Naive thymus-derived CD4-positive, alpha-beta T cell (primary cell): ENCODE measurements at regions of chr3 and their contacts with region 1.

Region 1: GRCh38 chr3:185937689-185938463 is at the start of gene TRA2B:
- DNase-seq: peak; percentile 93 to 99 (median 99)
- ATAC-seq: peak; percentile 94
- H3K4me3 ChIP-seq: peak within 1 kb of the TSS; percentile 99
- H3K4me3 Mint-ChIP-seq: peak within 1 kb of the TSS; percentile 91 to 100 (median 100)
- H3K27ac ChIP-seq: peak within 1 kb of the TSS; percentile 95
- H3K27ac Mint-ChIP-seq: peak within 1 kb of the TSS; percentile 99 to 100 (median 100)
- H3K4me1 ChIP-seq: peaks cover 16 to 20% of the 10 kb centered on the region in 2 donors
- H3K4me1 Mint-ChIP-seq: peaks cover 27 to 52% (median 41%) of the 10 kb centered on the region in 7 donors
- H3K27me3 ChIP-seq: no peaks in the 10 kb centered on the region
- H3K27me3 Mint-ChIP-seq: peaks cover 0 to 16% (median 0%) of the 10 kb centered on the region in 5 donors
- total RNA-seq, gene TRA2B: 194 to 673 (median 216) TPM

Region 2: GRCh38 chr3:185021256-185021655 is 916.6 kb before region 1 on chr3:
- CTCF ChIA-PET with region 1: no interaction called
- POLR2A ChIA-PET with region 1: no interaction called
- intact Hi-C with region 1: no loop called
- DNase-seq: no peak
- ATAC-seq: no peak
- H3K4me3 ChIP-seq: no peak overlapping the region
- H3K4me3 Mint-ChIP-seq: no peak overlapping the region
- H3K27ac ChIP-seq: no peak overlapping the region
- H3K27ac Mint-ChIP-seq: no peak overlapping the region
- H3K4me1 ChIP-seq: no peaks in the 10 kb centered on the region
- H3K4me1 Mint-ChIP-seq: peaks cover 0 to 4% (median 0%) of the 10 kb centered on the region in 7 donors
- H3K27me3 ChIP-seq: no peaks in the 10 kb centered on the region
- H3K27me3 Mint-ChIP-seq: no peaks in the 10 kb centered on the region

Region 3: DNA sequence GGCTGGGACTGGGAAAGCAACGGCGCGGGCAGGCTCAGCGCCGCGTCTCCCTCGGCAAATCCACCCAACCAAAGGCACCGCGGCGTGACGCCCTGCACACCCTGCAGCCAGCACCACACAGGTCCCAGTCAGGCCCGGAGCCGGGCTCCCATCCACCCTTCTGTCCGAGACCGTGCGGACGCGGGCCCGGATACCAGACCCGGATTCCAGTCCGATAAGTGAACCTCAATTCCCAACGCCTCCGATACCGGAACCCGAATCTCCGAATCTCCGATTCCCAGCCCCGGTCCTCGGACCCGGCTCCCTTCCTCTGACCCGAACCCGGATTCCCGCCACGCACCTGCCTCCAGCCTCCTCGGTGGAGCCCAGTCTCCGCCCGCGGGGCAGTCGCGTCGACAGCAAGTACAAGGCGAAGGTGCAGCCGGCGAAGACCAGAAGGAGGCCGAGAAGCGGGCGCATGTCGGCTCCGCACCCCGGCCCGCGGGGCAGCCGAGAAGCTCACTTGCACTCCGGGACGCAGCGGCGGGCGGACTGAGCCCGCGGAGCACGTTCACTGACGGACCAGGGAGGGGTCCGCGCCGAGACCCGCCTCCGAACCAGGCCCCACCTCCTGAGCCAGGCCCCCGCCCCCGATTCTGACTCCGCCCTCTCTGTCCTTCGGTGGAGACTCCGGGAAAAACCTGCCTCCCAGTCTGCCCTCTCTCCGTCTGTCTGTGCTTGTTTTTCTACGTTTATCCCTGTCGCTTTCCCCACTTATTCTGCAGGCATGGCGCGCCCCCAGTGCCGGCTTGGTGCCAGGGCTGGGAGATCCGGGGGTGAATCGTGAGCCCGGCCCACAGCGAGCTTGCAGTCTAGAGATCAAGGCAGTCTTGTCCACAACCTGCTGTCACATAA is 439.1 kb before region 1 on chr3 and contains the start of gene TMEM41A:
- CTCF ChIA-PET with region 1: no interaction called
- POLR2A ChIA-PET with region 1: no interaction called
- intact Hi-C with region 1: loop called (anchors 2 to 10 kb)
- DNase-seq: peak; percentile 80 to 94 (median 88)
- ATAC-seq: peak; percentile 99
- H3K4me3 ChIP-seq: peak within 1 kb of the TSS; percentile 93
- H3K4me3 Mint-ChIP-seq: peak within 1 kb of the TSS; percentile 87 to 98 (median 96)
- H3K27ac ChIP-seq: peak within 1 kb of the TSS; percentile 76
- H3K27ac Mint-ChIP-seq: peak within 1 kb of the TSS; percentile 87 to 95 (median 90)
- H3K4me1 ChIP-seq: peaks cover 17 to 24% of the 10 kb centered on the region in 2 donors
- H3K4me1 Mint-ChIP-seq: peaks cover 6 to 40% (median 29%) of the 10 kb centered on the region in 7 donors
- H3K27me3 ChIP-seq: no peaks in the 10 kb centered on the region
- H3K27me3 Mint-ChIP-seq: peaks cover 0 to 10% (median 0%) of the 10 kb centered on the region in 5 donors
- total RNA-seq, gene TMEM41A: 23.7 to 30.5 (median 29.1) TPM

Region 4: DNA sequence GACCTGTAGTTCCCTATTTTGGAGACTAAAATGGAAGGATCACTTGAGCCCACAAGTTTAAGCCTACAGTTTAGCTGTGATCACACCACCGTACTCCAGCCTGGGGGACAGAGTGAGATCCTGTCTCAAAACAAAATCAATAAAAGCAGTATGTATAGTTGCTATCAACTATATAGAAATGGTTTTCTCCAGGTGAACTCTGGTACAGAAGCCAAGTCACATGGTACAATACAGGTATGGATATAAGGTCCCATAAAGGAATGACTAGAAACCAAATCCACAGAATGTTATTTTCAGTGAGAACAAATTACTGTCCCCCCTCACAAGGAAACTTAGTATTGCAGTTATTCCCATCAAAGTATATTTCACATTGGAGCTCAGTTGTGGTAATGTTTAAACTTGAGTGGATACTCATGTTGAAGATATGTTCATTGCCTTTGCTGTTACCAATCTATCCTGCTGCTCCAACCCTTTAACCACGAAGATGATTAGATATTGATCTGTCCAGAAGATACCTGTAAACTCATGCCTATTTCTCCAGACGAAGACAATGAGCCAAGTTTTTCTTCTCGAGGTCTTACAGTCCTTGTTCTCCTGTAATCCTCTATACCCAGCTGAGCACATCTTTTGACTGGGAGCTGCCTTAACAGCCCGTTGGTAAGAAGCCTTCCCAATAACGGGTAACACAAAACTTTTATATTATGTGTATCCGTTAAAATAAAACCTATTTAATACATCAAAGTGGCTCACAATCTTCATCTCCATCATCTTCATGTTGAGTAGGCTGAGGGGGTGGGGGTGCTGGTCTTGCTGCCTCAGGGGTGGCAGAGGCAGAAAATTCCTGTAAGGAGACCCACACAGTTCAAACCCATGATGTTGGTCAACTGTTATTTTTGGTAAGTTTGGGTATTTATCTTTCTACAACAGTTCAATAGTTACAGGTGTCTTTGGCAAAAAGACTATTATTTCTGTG is 24.7 kb before region 1 on chr3:
- CTCF ChIA-PET with region 1: interaction called, 4 read pairs
- POLR2A ChIA-PET with region 1: interaction called, 5 read pairs
- intact Hi-C with region 1: loop called in 1 of 2 experiments (anchors 2 kb)
- DNase-seq: no peak
- ATAC-seq: peak; percentile 37
- H3K4me3 ChIP-seq: no peak overlapping the region
- H3K4me3 Mint-ChIP-seq: peak overlapping the region in 1 of 10 donors; percentile 11
- H3K27ac ChIP-seq: no peak overlapping the region
- H3K27ac Mint-ChIP-seq: peak overlapping the region in 4 of 9 donors; percentile 0 to 48 (median 18)
- H3K4me1 ChIP-seq: no peaks in the 10 kb centered on the region
- H3K4me1 Mint-ChIP-seq: peaks cover 4 to 12% (median 9%) of the 10 kb centered on the region in 7 donors
- H3K27me3 ChIP-seq: no peaks in the 10 kb centered on the region
- H3K27me3 Mint-ChIP-seq: peaks cover 0 to 2% (median 0%) of the 10 kb centered on the region in 5 donors

Region 5: DNA sequence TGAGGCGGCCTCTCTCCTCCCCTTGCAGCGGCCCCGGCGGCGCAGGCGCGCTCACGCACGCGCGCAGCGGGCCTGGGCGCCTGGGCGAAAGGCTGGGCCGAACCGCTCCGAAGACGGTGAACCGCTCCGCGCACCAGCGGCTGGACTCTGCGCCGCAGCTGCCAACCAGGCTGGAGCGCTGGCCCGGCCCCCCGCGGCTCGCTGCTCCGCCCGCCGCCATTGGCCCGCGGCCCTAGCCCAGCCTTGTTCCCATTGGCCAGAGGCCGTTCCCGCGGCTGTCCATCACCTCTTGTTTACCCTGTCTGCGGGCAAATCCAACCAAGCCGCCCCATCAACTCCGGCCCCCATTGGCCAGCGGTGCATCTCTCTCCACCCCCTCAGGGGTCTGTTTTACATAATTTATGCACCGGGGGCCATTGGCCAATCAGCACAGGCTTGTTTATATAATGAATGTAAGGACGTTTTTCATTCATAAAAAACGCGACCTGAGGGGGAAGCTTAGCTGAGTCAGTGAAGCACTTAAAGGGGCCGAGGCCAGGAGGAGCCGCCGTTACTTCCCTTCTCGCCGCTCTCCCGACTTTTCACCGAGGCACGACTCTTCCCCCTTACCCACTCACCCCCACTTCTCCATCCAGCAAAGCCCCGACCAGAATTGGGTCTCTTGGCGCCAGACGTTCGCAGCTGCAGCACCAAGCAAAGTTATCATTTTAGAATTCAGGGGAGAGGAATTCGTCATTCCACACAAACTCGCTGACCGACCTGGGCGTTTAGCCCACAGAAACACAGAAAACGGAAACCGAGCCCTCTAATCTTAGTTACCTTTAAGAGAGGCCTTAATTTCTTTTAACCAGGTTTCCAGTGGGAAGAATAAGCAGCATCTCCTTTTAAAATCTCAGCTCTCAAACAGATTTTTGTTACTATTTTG is 171.3 kb after region 1 on chr3 and contains the start of gene ETV5:
- CTCF ChIA-PET with region 1: no interaction called
- POLR2A ChIA-PET with region 1: interaction called, 3 read pairs
- intact Hi-C with region 1: loop called (anchors 2 to 5 kb)
- DNase-seq: peak; percentile 65 to 91 (median 79)
- ATAC-seq: peak; percentile 97
- H3K4me3 ChIP-seq: peak within 1 kb of the TSS; percentile 71
- H3K4me3 Mint-ChIP-seq: peak within 1 kb of the TSS; percentile 86 to 97 (median 90)
- H3K27ac ChIP-seq: no peak within 1 kb of the TSS
- H3K27ac Mint-ChIP-seq: peak within 1 kb of the TSS in 5 of 9 donors; percentile 7 to 90 (median 60)
- H3K4me1 ChIP-seq: peaks cover 23 to 35% of the 10 kb centered on the region in 2 donors
- H3K4me1 Mint-ChIP-seq: peaks cover 34 to 38% (median 38%) of the 10 kb centered on the region in 7 donors
- H3K27me3 ChIP-seq: peaks cover 22 to 54% of the 10 kb centered on the region in 2 donors
- H3K27me3 Mint-ChIP-seq: peaks cover 84 to 87% (median 86%) of the 10 kb centered on the region in 5 donors
- total RNA-seq, gene ETV5: 0.56 to 2.3 (median 0.97) TPM in 4 of 5 experiments, not detected in the other

Region 6: DNA sequence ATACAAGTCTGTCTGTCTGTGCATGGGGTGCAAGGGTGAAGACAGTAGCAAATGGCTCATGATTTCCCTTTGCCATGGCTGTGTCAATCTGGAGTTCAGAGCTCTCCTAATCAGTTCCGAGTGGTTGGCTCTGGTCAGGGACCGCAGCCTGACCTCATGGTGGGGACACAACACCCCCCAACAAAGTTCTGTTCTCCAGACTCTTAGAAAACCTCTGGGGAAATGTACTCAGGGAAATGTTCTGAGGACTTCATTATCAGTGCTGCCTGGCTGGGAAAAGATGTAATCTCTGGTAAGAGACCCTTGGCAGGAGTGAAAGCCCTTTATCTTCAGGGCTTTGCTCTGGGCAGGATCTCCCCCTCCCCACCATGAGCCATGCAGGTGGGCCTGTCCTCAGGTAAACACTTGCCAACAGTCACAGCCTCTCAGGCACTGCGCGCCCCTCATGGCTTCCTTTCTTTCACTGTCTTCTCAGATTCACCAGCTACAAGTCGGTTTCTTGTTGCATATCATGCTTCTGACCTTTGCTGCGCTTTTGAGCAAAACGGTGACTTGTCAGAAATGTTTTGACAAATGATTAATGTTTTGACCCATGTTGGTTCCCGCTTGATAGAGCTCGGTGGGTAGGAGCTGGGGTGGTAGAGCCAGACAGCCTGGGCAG is 1087.9 kb after region 1 on chr3:
- CTCF ChIA-PET with region 1: no interaction called
- POLR2A ChIA-PET with region 1: interaction called, 13 read pairs
- intact Hi-C with region 1: loop called (anchors 5 kb)
- DNase-seq: peak in 4 of 9 donors; percentile 35 to 45 (median 41)
- ATAC-seq: peak; percentile 17
- H3K4me3 ChIP-seq: peak overlapping the region; percentile 68
- H3K4me3 Mint-ChIP-seq: peak overlapping the region; percentile 88 to 97 (median 93)
- H3K27ac ChIP-seq: peak overlapping the region; percentile 78
- H3K27ac Mint-ChIP-seq: peak overlapping the region; percentile 86 to 99 (median 92)
- H3K4me1 ChIP-seq: peaks cover 31 to 45% of the 10 kb centered on the region in 2 donors
- H3K4me1 Mint-ChIP-seq: peaks cover 40 to 73% (median 61%) of the 10 kb centered on the region in 7 donors
- H3K27me3 ChIP-seq: no peaks in the 10 kb centered on the region
- H3K27me3 Mint-ChIP-seq: no peaks in the 10 kb centered on the region